ENCODE measurements at regions of chr11 and their contacts with region 1.

Region 1: GRCh38 chr11:57456960-57457642 is 3.2 kb upstream of the RTN4RL2 start:
- DNase-seq: peak; percentile 80
- ATAC-seq: peak; percentile 59
- H3K4me3 Mint-ChIP-seq: peak overlapping the region; percentile 22
- H3K27ac Mint-ChIP-seq: no peak overlapping the region
- H3K4me1 Mint-ChIP-seq: peaks cover 30% of the 10 kb centered on the region
- H3K27me3 Mint-ChIP-seq: peaks cover 31% of the 10 kb centered on the region

Region 2: GRCh38 chr11:57240757-57241156 is 216.3 kb before region 1 on chr11:
- CTCF ChIA-PET with region 1: no interaction called
- POLR2A ChIA-PET with region 1: no interaction called
- DNase-seq: no peak
- ATAC-seq: no peak
- H3K4me3 Mint-ChIP-seq: no peak overlapping the region
- H3K27ac Mint-ChIP-seq: no peak overlapping the region
- H3K4me1 Mint-ChIP-seq: peaks cover 17% of the 10 kb centered on the region
- H3K27me3 Mint-ChIP-seq: peaks cover 29% of the 10 kb centered on the region

Region 3: GRCh38 chr11:57335343-57336110 is 121.6 kb before region 1 on chr11 and contains the start of gene SSRP1:
- CTCF ChIA-PET with region 1: interaction called, 14 read pairs
- POLR2A ChIA-PET with region 1: no interaction called
- DNase-seq: peak; percentile 90
- ATAC-seq: peak; percentile 96
- H3K4me3 Mint-ChIP-seq: peak within 1 kb of the TSS; percentile 92
- H3K27ac Mint-ChIP-seq: peak within 1 kb of the TSS; percentile 99
- H3K4me1 Mint-ChIP-seq: peaks cover 39% of the 10 kb centered on the region
- H3K27me3 Mint-ChIP-seq: peaks cover 7% of the 10 kb centered on the region
- total RNA-seq, gene SSRP1: 185 to 191 TPM

Region 4: GRCh38 chr11:57434640-57435546 is 22.2 kb before region 1 on chr11:
- CTCF ChIA-PET with region 1: interaction called, 12 read pairs
- POLR2A ChIA-PET with region 1: no interaction called
- DNase-seq: no peak
- ATAC-seq: no peak
- H3K4me3 Mint-ChIP-seq: no peak overlapping the region
- H3K27ac Mint-ChIP-seq: no peak overlapping the region
- H3K4me1 Mint-ChIP-seq: peaks cover 5% of the 10 kb centered on the region
- H3K27me3 Mint-ChIP-seq: peaks cover 7% of the 10 kb centered on the region

Region 5: GRCh38 chr11:57480409-57481137 is 23.5 kb after region 1 on chr11:
- CTCF ChIA-PET with region 1: interaction called, 239 read pairs
- POLR2A ChIA-PET with region 1: interaction called, 3 read pairs
- DNase-seq: peak; percentile 87
- ATAC-seq: peak; percentile 68
- H3K4me3 Mint-ChIP-seq: no peak overlapping the region
- H3K27ac Mint-ChIP-seq: no peak overlapping the region
- H3K4me1 Mint-ChIP-seq: peaks cover 27% of the 10 kb centered on the region
- H3K27me3 Mint-ChIP-seq: peaks cover 39% of the 10 kb centered on the region

Region 6: GRCh38 chr11:57508341-57509170 is 51.5 kb after region 1 on chr11:
- CTCF ChIA-PET with region 1: interaction called, 46 read pairs
- POLR2A ChIA-PET with region 1: no interaction called
- DNase-seq: no peak
- ATAC-seq: no peak
- H3K4me3 Mint-ChIP-seq: no peak overlapping the region
- H3K27ac Mint-ChIP-seq: no peak overlapping the region
- H3K4me1 Mint-ChIP-seq: peaks cover 31% of the 10 kb centered on the region
- H3K27me3 Mint-ChIP-seq: no peaks in the 10 kb centered on the region

Region 7: GRCh38 chr11:57567515-57568329 is 110.6 kb after region 1 on chr11 and contains the start of gene UBE2L6:
- CTCF ChIA-PET with region 1: interaction called, 11 read pairs
- POLR2A ChIA-PET with region 1: no interaction called
- DNase-seq: peak; percentile 72
- ATAC-seq: peak; percentile 76
- H3K4me3 Mint-ChIP-seq: peak within 1 kb of the TSS; percentile 97
- H3K27ac Mint-ChIP-seq: peak within 1 kb of the TSS; percentile 93
- H3K4me1 Mint-ChIP-seq: peaks cover 47% of the 10 kb centered on the region
- H3K27me3 Mint-ChIP-seq: no peaks in the 10 kb centered on the region
- total RNA-seq, gene UBE2L6: 222 to 232 TPM

Region 8: DNA sequence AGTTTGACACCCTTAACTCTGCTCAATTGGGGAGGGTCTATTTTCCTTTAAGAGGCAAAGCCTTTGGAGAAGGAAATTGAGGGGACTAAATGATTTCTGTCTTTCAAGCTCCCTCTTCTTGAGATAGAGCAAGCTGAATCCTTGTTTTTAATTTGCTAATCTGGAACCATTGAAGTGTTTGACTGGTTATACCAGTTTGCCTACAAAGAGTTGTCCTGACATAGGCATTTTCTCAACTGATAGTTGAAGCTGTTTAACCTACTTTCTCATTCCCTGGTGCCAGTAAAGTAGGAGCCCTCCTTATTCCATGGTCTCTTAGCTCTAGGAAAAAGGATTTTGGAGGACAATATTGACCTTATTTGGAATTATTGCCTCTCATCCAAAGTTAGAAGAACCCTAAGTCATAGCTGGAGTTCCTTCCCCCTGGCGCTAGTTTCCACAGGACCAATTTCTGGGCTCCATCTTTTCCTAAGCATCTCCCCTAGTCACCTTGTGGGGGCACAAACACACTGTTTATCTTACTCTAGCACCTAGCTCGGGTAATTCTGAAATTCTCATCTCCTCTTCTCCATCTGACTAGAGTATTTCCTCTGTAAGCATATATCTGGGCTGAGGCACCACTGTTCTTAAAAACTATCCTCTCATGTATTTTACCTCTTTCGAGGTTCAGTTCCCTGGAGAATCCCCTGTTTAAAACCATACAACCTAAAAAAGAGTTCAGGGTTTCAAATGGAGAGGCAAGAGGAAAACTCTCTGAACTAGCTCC is 218.3 kb after region 1 on chr11:
- CTCF ChIA-PET with region 1: no interaction called
- POLR2A ChIA-PET with region 1: no interaction called
- DNase-seq: no peak
- ATAC-seq: no peak
- H3K4me3 Mint-ChIP-seq: no peak overlapping the region
- H3K27ac Mint-ChIP-seq: no peak overlapping the region
- H3K4me1 Mint-ChIP-seq: peaks cover 64% of the 10 kb centered on the region
- H3K27me3 Mint-ChIP-seq: no peaks in the 10 kb centered on the region